Right ventricle myocardium inferior (tissue), 1 donor: ENCODE measurements at regions of chr3 and their contacts with region 1.

Region 1: DNA sequence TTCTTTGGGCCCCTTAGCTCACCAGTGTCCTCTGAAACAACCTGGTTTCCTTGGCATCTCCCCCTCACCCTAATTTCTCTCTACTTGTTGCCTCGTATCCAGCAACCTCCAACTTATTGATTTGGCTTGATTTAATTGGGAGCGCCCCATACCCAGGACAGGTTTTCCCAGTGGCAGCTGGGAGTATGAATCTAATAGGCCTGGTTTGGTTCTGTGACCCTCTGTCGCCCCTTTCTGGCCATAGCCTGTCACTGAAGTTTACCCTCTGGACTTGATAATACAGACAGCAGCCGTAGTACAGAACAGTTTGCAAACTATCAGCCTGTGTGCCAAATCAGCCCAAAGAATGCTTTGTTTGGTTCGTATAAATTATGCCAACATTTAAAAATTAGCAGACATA is 525.1 kb upstream of the GOLIM4 start:
- DNase-seq: no peak
- ATAC-seq: peak; percentile 62

Region 2: GRCh38 chr3:168511428-168512014 is 109.3 kb before region 1 on chr3:
- intact Hi-C with region 1: loop called (anchors 10 kb)
- DNase-seq: no peak
- ATAC-seq: no peak